Uterus (tissue), 4 donors: ENCODE measurements at regions of chr19 and their contacts with region 1.

Region 1: GRCh38 chr19:15091901-15092753 is 10.1 kb downstream of the OR1I1 start:
- DNase-seq: peak in 1 of 2 donors; percentile 49
- H3K4me3 ChIP-seq: no peak overlapping the region
- H3K27ac ChIP-seq: no peak overlapping the region
- H3K4me1 ChIP-seq: no peaks in the 10 kb centered on the region
- H3K27me3 ChIP-seq: no peaks in the 10 kb centered on the region
- CTCF ChIP-seq: peak; percentile 45 to 75 (median 64)
- POLR2A ChIP-seq: no peak

Region 2: GRCh38 chr19:15154002-15154612 is 62.0 kb after region 1 on chr19:
- intact Hi-C with region 1: loop called (anchors 5 kb)
- DNase-seq: no peak
- H3K4me3 ChIP-seq: no peak overlapping the region
- H3K27ac ChIP-seq: no peak overlapping the region
- H3K4me1 ChIP-seq: no peaks in the 10 kb centered on the region
- H3K27me3 ChIP-seq: no peaks in the 10 kb centered on the region
- CTCF ChIP-seq: peak in 1 of 4 experiments; percentile 13
- POLR2A ChIP-seq: no peak

Region 3: GRCh38 chr19:15555759-15556633 is 463.9 kb after region 1 on chr19:
- intact Hi-C with region 1: loop called (anchors 10 kb)
- DNase-seq: peak; percentile 83 to 86
- H3K4me3 ChIP-seq: peak overlapping the region in 1 of 2 donors; percentile 10
- H3K27ac ChIP-seq: peak overlapping the region in 1 of 2 donors; percentile 61
- H3K4me1 ChIP-seq: peaks cover 0 to 6% of the 10 kb centered on the region in 2 donors
- H3K27me3 ChIP-seq: no peaks in the 10 kb centered on the region
- CTCF ChIP-seq: peak; percentile 73 to 89 (median 84)
- POLR2A ChIP-seq: no peak